Activated CD4-positive, alpha-beta memory T cell treated with anti-CD3 and anti-CD28 coated beads, Interleukin-2, amount 10 ng/mL, durations not matched to agents 7 days and 5 days (primary cell): ENCODE measurements at regions of chr19 and their contacts with region 1.

Region 1: GRCh38 chr19:13195678-13196077 is 45.5 kb downstream of the IER2 start:
- DNase-seq: peak; percentile 71
- H3K4me3 Mint-ChIP-seq: no peak overlapping the region
- H3K27ac Mint-ChIP-seq: no peak overlapping the region
- H3K4me1 Mint-ChIP-seq: peaks cover 29% of the 10 kb centered on the region
- H3K27me3 Mint-ChIP-seq: no peaks in the 10 kb centered on the region

Region 2: DNA sequence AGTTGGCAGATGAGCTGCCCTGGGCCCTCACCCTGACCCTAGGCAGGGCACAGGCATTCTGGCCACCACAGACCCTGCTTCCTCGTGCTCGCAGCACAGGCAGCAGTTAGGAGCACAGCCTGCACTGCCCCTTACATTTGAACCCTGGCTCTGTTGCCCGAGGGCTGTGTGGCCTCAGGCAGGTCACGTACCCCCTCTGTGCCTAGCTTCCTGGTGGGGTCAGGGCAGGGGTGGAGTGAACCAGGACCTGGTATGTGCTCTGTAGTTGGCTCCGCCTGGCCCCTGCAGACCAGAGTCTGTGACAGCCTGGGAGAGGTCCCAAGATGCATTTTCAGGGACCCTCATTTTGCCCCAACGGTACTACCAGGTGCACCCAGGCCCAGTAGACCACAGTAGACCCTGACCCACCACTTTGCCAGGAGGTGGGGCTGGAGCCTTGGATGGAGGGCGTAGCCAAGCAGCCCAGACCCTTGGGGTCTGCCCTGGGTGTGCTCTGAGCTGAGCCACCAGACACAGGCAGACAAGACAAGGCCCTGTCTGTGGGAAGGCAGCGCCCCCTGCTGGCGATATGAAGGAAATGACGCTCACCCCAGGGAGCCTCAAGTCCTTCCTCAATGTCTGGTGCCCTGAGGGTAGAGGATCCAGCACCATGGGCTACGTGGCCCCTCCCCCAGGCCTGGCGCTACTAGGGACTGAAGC is 102.1 kb before region 1 on chr19:
- CTCF ChIA-PET with region 1: no interaction called
- POLR2A ChIA-PET with region 1: no interaction called
- DNase-seq: peak; percentile 85
- H3K4me3 Mint-ChIP-seq: no peak overlapping the region
- H3K27ac Mint-ChIP-seq: no peak overlapping the region
- H3K4me1 Mint-ChIP-seq: peaks cover 30% of the 10 kb centered on the region
- H3K27me3 Mint-ChIP-seq: peaks cover 31% of the 10 kb centered on the region

Region 3: DNA sequence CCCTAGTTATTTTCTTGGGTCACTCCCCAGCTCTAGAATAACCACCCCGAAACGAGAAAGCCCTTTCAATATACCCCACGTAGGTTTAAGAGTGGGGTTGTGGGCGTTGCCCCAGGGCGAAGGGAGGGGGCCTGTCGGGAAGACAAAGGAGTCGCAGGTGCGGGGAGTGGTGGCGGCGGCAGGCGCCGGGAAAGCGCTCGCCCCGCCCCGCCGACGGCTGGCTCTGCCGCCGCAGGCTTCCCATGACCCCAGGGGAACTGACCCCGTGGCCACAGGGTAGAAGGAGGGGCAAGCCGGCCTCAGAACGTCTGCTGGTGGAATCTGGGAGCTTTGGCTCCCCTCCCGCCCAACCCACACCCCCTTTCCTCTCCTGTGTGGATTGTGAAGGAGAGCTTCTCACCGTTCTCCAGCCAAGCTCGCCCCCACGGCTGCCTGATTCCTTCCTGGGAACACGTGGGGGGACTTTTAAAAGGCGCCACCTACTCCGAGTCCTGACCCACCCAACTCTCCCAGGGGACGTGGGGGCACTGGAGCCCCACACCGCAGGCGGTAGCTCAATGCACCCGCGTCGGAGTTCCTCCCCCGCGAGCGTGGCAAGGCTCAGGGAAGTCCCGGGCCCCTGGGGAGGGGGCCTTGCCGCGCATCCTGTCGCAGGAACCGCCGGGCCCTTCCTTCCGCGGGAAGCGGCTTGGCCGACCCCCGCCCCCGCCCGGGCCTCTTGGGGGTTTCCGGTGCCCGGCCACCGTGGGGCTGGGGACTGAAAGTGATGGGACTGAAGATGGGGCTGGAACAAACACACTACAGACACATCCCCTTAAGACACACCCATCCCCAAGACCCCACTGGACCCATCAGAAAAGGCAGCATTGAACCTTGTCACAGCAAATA is 40.0 kb before region 1 on chr19:
- CTCF ChIA-PET with region 1: interaction called, 36 read pairs
- POLR2A ChIA-PET with region 1: interaction called, 26 read pairs
- DNase-seq: peak; percentile 84
- H3K4me3 Mint-ChIP-seq: peak overlapping the region; percentile 95
- H3K27ac Mint-ChIP-seq: peak overlapping the region; percentile 99
- H3K4me1 Mint-ChIP-seq: peaks cover 47% of the 10 kb centered on the region
- H3K27me3 Mint-ChIP-seq: no peaks in the 10 kb centered on the region

Region 4: DNA sequence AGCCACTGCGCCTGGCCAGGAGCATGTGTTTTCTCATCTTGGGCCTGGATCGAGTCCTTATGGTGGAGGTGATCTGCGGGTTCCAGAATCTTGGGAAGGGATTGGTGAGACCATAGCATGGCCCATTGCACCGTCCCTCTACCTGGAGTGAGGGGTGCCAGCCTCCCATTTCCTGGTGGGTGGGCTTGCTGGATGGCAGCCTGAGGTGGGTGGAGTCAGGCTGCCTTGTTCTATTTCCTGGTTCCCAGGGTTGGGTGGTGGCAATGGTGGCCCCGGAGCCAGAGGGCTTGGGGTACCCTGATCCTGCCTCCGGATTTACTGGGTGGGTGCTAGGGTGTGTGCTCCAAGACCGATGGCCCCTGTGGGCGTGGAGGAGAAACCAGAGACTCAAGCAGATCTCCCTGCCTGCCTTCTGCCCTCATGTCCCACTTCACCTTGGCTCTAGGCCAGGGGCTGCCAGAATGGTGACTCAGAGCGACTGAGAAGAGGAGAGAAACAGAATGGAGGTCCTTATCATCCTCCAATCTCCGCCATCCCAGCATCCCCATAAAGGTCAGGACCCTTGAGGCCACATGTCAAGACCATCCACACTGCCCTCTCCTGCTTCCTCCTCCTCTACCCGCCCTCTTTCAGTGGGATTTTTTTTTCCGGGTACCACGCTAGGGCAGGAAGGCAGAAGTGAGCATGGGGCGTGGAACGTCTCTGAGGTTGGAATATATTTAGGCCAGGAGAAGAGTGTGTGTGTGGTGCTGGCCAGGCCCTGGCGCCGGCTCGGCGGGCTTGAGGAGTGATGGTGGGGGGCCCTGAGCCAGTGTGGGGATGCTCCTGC is 23.4 kb before region 1 on chr19:
- CTCF ChIA-PET with region 1: interaction called, 28 read pairs
- POLR2A ChIA-PET with region 1: interaction called, 11 read pairs
- DNase-seq: peak; percentile 71
- H3K4me3 Mint-ChIP-seq: peak overlapping the region; percentile 78
- H3K27ac Mint-ChIP-seq: peak overlapping the region; percentile 90
- H3K4me1 Mint-ChIP-seq: peaks cover 61% of the 10 kb centered on the region
- H3K27me3 Mint-ChIP-seq: no peaks in the 10 kb centered on the region

Region 5: GRCh38 chr19:13207846-13208671 is 12.4 kb after region 1 on chr19:
- CTCF ChIA-PET with region 1: interaction called, 13 read pairs
- POLR2A ChIA-PET with region 1: no interaction called
- DNase-seq: peak; percentile 68
- H3K4me3 Mint-ChIP-seq: peak overlapping the region; percentile 84
- H3K27ac Mint-ChIP-seq: peak overlapping the region; percentile 91
- H3K4me1 Mint-ChIP-seq: peaks cover 13% of the 10 kb centered on the region
- H3K27me3 Mint-ChIP-seq: no peaks in the 10 kb centered on the region

Region 6: DNA sequence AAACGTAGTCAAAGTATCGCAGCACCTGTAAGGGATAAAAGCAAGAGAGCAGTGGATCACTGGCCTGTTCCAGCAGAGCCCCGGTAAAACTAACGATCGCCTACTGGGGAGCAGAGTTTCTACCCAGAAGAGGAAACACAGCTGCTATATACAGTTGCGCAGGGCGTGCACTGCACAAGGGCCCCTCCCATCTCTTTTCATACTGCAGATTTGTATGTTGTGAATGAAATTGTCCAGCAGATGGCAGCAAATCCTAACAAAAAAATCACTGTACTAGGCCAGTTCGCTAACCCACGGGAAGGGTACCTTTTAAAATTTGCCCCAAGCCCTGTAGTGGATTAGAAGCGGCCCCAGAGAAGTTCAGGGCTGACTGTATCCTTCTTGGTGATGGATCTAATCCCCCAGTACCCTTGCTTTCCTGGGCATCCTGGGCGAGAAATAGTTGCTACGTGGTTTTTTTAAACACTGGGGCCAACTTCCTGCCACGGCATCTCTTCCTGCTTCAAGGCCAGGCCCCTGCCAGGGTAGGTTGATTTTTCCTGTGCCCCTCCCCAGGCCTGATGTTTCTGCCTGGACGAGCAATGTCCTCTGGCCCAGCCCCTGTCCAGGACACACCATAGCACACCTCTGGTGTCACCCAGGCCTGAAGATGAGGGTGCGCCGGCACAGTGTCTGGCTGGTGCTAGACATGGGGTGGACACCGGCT is 81.6 kb after region 1 on chr19:
- CTCF ChIA-PET with region 1: interaction called, 12 read pairs
- POLR2A ChIA-PET with region 1: interaction called, 3 read pairs
- DNase-seq: peak; percentile 74
- H3K4me3 Mint-ChIP-seq: peak overlapping the region; percentile 38
- H3K27ac Mint-ChIP-seq: peak overlapping the region; percentile 87
- H3K4me1 Mint-ChIP-seq: peaks cover 31% of the 10 kb centered on the region
- H3K27me3 Mint-ChIP-seq: no peaks in the 10 kb centered on the region

Region 7: GRCh38 chr19:13302526-13303270 is 107.0 kb after region 1 on chr19:
- CTCF ChIA-PET with region 1: no interaction called
- POLR2A ChIA-PET with region 1: no interaction called
- DNase-seq: no peak
- H3K4me3 Mint-ChIP-seq: no peak overlapping the region
- H3K27ac Mint-ChIP-seq: no peak overlapping the region
- H3K4me1 Mint-ChIP-seq: no peaks in the 10 kb centered on the region
- H3K27me3 Mint-ChIP-seq: peaks cover 31% of the 10 kb centered on the region